ENCODE measurements at regions of chr3 and their contacts with region 1.

Region 1: GRCh38 chr3:57637391-57637790 is 40.2 kb upstream of the ARF4 start:
- DNase-seq: no peak
- H3K4me3 ChIP-seq: no peak overlapping the region
- H3K27ac ChIP-seq: no peak overlapping the region
- H3K4me1 ChIP-seq: no peaks in the 10 kb centered on the region
- H3K27me3 ChIP-seq: no peaks in the 10 kb centered on the region
- CTCF ChIP-seq: no peak
- POLR2A ChIP-seq: no peak

Region 2: GRCh38 chr3:57281715-57282114 is 355.7 kb before region 1 on chr3:
- intact Hi-C with region 1: loop called (anchors 10 kb)
- DNase-seq: no peak
- H3K4me3 ChIP-seq: no peak overlapping the region
- H3K27ac ChIP-seq: no peak overlapping the region
- H3K4me1 ChIP-seq: no peaks in the 10 kb centered on the region
- H3K27me3 ChIP-seq: no peaks in the 10 kb centered on the region
- CTCF ChIP-seq: no peak
- POLR2A ChIP-seq: no peak

Region 3: GRCh38 chr3:57706462-57706861 is 69.1 kb after region 1 on chr3:
- intact Hi-C with region 1: no loop called
- DNase-seq: no peak
- H3K4me3 ChIP-seq: no peak overlapping the region
- H3K27ac ChIP-seq: no peak overlapping the region
- H3K4me1 ChIP-seq: no peaks in the 10 kb centered on the region
- H3K27me3 ChIP-seq: no peaks in the 10 kb centered on the region
- CTCF ChIP-seq: no peak
- POLR2A ChIP-seq: no peak